ENCODE measurements at regions of chr11 and their contacts with region 1.

Region 1: GRCh38 chr11:93225662-93226061 is 27.9 kb upstream of the SLC36A4 start:
- DNase-seq: no peak
- ATAC-seq: no peak

Region 2: DNA sequence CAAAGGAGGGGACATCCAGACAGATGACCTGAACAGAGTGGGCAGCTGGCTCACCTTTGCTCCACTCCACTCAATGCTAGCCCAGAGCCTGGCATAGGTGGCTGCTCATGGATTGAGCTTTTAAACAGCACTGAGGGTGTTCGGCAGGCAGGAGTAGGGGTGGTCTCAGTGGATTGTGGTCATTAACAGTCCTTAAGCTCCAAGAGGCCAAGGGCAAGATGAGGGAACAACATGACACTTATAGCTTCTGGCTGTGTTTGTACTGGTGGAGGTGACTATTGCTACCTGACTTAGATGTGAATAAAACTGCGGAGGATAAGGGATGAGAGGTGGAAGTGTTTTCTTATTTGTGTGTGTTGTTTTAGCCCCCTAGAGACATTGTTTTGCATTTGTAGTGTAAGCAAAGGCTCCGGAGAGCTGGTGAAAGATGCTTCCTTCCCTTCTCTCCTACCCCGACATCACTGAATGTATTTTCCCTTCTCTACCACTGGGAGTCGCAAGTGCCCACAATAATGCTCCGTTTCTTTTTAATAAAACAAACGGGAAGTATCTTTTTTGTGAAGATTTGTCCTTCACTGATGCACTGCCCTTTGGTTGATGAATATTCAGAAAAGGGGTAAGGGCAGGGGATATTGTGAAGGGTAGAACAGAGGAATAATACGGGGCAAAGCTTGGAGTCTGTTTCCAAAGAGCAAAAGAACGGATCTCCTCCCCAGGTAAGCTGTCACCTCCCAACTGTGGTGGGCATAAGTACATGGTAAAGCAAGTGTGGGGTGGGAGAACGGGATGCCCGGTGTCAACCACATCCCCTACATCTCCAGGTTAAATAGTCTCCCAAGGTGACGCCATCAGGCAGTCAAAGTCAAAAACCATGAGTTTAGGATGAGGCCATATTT is 283.7 kb before region 1 on chr11:
- intact Hi-C with region 1: loop called (anchors 5 kb)
- DNase-seq: no peak
- ATAC-seq: no peak

Measured in Right ventricle myocardium inferior (tissue), 1 donor.